ENCODE measurements at regions of chr13 and their contacts with region 1.

Region 1: GRCh38 chr13:99666146-99666805 is 165.0 kb downstream of the TM9SF2 start:
- DNase-seq: no peak
- H3K4me3 ChIP-seq: no peak overlapping the region
- H3K27ac ChIP-seq: no peak overlapping the region
- H3K4me1 ChIP-seq: no peaks in the 10 kb centered on the region
- CTCF ChIP-seq: no peak

Region 2: DNA sequence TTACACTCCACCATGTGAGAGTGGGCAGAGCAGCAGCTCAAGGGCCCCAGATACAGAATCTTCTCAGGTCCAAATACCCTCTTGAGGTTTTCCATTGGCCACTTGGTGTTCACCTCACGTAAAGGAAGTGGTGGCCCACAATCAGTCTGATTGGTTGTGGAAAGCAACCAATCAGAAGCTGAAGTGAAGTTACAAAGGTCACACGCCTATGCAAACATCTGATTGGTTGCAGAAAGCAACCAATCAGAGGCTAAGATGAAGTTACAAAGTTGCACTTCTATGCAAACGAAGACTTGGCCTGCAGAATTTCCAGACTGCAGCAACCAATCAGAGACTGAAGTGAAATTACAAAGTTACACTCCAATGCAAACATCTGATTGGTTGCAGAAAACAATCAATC is 179.3 kb before region 1 on chr13:
- CTCF ChIA-PET with region 1: interaction called, 10 read pairs
- POLR2A ChIA-PET with region 1: no interaction called
- intact Hi-C with region 1: no loop called
- DNase-seq: no peak
- H3K4me3 ChIP-seq: no peak overlapping the region
- H3K27ac ChIP-seq: no peak overlapping the region
- H3K4me1 ChIP-seq: no peaks in the 10 kb centered on the region
- CTCF ChIP-seq: no peak

Region 3: GRCh38 chr13:99805361-99805760 is 139.1 kb after region 1 on chr13:
- CTCF ChIA-PET with region 1: no interaction called
- POLR2A ChIA-PET with region 1: no interaction called
- intact Hi-C with region 1: no loop called
- DNase-seq: no peak
- H3K4me3 ChIP-seq: no peak overlapping the region
- H3K27ac ChIP-seq: no peak overlapping the region
- H3K4me1 ChIP-seq: no peaks in the 10 kb centered on the region
- CTCF ChIP-seq: no peak